Ascending aorta (tissue), 2 donors: ENCODE measurements at regions of chr9 and their contacts with region 1.

Region 1: DNA sequence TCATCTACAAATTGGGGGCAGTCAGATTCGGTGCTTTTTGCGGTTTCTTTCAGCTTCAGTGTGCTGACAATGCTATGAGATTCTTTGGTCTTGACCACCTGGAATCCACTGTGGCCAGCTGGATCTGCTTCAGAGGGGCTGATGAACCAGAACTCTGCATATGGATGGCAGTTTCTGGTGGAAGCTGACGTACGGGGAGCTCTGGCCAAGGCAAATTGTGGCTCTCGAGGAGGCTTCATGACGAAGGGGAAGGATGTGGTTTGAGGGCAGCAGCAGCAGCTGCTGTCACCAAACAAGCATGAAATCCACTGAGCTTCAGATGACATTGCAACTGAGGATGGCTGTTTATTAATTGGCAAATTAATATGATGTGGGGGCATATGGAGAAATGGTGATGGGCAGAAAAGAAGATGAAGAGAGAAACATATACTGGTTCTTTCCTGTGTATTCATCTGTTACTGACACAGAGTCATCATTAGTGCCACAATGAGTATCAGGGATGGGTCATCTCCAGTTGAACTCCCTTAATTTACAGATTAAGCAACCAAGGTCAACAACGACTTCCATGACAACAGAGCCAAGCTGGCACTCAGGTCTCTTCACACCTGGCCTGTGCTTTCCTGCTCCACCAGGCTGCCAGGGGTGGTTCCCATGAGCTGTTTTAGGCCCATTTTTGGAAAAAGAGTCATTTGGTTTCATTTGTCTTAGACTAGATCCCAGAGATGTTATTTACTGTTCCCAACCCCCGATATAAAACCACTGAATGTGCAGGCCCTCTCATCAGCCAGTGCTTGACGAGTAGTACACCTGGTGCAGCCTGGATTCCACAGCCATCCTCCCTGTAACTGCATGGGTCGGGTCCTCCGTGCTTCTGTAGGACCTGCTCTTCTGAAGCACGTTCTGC is 134.7 kb downstream of the AOPEP start:
- DNase-seq: peak; percentile 27 to 73
- H3K4me3 ChIP-seq: no peak overlapping the region
- H3K27ac ChIP-seq: peak overlapping the region in 1 of 2 donors; percentile 83
- H3K4me1 ChIP-seq: peaks cover 4 to 26% of the 10 kb centered on the region in 2 donors
- H3K27me3 ChIP-seq: no peaks in the 10 kb centered on the region
- CTCF ChIP-seq: no peak

Region 2: DNA sequence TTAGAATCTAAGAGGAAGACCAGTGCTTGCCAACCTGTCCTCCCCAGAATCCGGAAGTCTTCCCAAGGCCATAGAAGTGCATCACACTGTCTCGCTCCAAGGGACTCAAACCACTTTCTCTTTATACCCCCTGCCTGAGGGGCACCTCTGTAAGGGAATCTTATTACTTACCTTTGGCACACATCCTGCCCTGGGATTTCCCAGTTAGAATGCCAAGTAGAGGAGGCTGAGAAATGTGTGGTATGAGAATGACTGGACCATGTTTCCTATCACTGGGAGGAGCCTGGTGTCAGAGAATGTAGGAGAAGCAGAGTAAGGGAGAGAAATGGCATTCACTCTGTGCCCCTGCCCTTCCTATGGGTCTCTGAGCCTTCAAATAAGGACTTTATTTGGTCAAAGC is 48.9 kb before region 1 on chr9:
- intact Hi-C with region 1: no loop called
- DNase-seq: no peak
- H3K4me3 ChIP-seq: no peak overlapping the region
- H3K27ac ChIP-seq: peak overlapping the region; percentile 51 to 96
- H3K4me1 ChIP-seq: peaks cover 11 to 48% of the 10 kb centered on the region in 2 donors
- H3K27me3 ChIP-seq: no peaks in the 10 kb centered on the region
- CTCF ChIP-seq: no peak

Region 3: GRCh38 chr9:94827584-94828304 is 33.5 kb before region 1 on chr9:
- intact Hi-C with region 1: loop called (anchors 2 kb)
- DNase-seq: no peak
- H3K4me3 ChIP-seq: no peak overlapping the region
- H3K27ac ChIP-seq: peak overlapping the region; percentile 82 to 89
- H3K4me1 ChIP-seq: peaks cover 5 to 57% of the 10 kb centered on the region in 2 donors
- H3K27me3 ChIP-seq: no peaks in the 10 kb centered on the region
- CTCF ChIP-seq: no peak

Region 4: DNA sequence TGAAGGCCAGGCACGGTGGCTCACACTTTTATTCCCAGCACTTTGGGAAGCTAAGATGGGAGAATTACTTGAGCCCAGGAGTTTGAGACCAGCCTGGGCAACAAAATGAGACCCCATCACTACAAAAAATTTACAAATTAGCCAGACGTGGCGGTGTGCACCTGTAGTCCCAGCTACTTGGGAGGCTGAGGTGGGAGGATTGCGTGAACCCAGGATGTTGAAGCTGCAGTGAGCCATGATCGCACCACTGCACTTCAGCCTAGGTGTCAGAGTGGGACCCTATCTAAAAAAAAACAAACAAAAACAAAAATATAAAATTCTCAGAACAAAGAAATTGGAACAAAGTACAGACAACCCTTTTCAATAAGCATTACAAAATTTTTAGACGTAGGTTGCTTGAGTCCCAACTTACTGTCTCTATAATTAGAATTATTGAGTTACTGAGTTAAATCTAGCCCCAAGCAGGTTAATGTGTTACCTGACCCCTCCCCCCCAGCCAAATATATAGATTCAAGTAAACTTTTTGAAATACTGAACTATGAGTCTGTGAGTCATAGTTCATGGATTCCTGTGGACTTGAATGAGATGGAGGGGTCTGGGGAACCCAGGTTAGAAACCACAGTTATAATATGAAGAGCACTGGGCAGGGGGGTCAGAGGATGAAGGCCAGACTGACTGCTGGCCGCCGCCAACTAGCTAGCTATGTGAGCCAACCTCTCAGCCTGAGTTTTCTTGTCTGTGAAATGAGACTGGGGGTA is 38.4 kb after region 1 on chr9:
- intact Hi-C with region 1: no loop called
- DNase-seq: no peak
- H3K4me3 ChIP-seq: peak overlapping the region in 1 of 2 donors; percentile 45
- H3K27ac ChIP-seq: peak overlapping the region; percentile 84 to 90
- H3K4me1 ChIP-seq: peaks cover 9 to 45% of the 10 kb centered on the region in 2 donors
- H3K27me3 ChIP-seq: no peaks in the 10 kb centered on the region
- CTCF ChIP-seq: no peak